Ascending aorta (tissue), 2 donors: ENCODE measurements at regions of chr9 and their contacts with region 1.

Region 1: GRCh38 chr9:14353222-14354056 is 39.5 kb upstream of the NFIB start:
- DNase-seq: peak; percentile 49 to 96
- H3K4me3 ChIP-seq: peak overlapping the region; percentile 18 to 68
- H3K27ac ChIP-seq: peak overlapping the region; percentile 87 to 90
- H3K4me1 ChIP-seq: peaks cover 14 to 35% of the 10 kb centered on the region in 2 donors
- H3K27me3 ChIP-seq: no peaks in the 10 kb centered on the region
- CTCF ChIP-seq: peak; percentile 87 to 96 (median 90)

Region 2: DNA sequence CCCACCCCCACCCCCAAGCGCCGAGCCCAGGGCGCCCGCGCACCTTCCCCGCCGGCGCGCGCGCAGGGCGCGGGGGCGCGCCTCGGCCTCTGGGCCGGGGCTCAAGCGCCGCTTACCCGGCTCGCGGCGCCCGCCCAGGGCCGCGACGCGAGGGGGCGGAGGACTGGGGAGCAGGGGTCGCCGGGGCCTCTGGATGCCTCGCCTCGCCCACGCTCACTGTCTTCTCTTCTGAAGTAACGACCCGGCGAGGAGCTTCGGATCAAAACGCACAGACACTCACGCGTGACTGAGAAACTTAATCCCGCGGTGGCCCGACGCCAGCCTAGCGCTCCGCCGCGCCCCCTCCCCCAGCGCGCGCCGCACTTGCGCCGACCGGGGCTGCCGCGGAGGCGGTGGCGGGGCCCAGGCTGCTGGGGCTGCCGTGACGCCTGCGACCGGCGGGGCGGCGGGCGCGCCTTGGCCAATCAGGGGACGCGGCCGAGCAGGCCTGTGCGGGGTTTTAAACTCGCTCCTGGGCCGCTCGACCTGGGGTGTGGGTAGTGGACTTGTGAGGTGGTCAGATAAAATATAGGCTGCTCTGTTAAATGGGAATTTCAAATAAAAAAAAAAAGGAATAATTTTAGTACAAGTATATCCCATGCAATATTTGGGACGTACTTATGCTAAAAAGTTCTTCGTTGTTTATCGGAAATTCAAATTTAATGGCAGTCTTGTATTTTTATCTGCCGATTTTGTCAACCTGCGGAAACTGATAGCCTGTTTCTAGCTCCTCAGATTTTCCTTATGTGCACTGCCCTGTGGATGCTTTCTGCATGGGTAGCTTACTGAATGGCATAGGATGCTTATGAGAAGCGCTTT is 1073.9 kb before region 1 on chr9 and contains the start of gene MPDZ:
- intact Hi-C with region 1: loop called (anchors 10 kb)
- DNase-seq: peak in 1 of 2 donors; percentile 85
- H3K4me3 ChIP-seq: peak within 1 kb of the TSS; percentile 72 to 86
- H3K27ac ChIP-seq: peak within 1 kb of the TSS; percentile 86 to 93
- H3K4me1 ChIP-seq: peaks cover 5 to 8% of the 10 kb centered on the region in 2 donors
- H3K27me3 ChIP-seq: no peaks in the 10 kb centered on the region
- CTCF ChIP-seq: peak in 1 of 3 experiments; percentile 25
- total RNA-seq, gene MPDZ: 46.2 TPM

Region 3: DNA sequence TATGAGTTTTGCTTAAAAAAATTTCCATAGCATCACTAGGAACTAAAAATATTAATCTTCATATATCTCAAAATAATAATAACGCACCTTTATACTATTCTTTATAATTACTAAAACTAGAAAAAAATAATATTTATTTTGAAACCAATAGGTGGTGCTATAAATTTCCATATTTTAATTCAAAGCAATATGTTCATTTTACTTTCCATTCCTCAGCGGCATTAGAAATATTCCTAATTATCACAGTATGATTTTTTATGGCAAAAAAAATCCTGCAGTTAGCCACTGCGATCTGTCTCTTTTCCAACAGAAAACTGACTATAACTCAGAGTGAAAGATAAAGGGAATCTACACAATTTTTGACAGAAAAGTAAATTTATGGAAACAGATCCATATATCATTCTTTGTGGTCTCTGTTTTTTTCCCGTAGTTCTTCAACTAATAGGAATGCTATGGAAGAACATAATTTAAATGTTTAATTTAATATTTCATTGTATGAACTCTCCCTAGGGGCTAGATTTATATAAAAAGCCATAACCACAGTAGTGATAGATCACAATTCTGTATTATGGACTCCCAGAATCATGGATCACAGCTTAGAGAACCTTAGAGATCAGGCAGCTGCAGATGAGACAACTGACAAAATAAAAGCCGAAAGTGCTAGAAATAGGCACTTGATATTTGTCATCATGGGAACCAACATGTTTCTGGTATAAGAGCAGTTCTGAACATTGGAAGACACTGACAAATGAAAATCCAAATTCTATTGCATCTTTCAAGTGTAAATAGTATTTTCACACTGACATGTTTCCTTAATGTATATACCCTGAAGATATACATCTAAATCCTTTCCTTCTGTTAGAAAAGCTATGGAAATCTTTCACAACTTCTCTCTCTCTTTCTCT is 906.2 kb before region 1 on chr9:
- intact Hi-C with region 1: loop called (anchors 5 kb)
- DNase-seq: no peak
- H3K4me3 ChIP-seq: no peak overlapping the region
- H3K27ac ChIP-seq: no peak overlapping the region
- H3K4me1 ChIP-seq: peaks cover 0 to 8% of the 10 kb centered on the region in 2 donors
- H3K27me3 ChIP-seq: no peaks in the 10 kb centered on the region
- CTCF ChIP-seq: peak in 2 of 3 experiments; percentile 17 to 31

Region 4: DNA sequence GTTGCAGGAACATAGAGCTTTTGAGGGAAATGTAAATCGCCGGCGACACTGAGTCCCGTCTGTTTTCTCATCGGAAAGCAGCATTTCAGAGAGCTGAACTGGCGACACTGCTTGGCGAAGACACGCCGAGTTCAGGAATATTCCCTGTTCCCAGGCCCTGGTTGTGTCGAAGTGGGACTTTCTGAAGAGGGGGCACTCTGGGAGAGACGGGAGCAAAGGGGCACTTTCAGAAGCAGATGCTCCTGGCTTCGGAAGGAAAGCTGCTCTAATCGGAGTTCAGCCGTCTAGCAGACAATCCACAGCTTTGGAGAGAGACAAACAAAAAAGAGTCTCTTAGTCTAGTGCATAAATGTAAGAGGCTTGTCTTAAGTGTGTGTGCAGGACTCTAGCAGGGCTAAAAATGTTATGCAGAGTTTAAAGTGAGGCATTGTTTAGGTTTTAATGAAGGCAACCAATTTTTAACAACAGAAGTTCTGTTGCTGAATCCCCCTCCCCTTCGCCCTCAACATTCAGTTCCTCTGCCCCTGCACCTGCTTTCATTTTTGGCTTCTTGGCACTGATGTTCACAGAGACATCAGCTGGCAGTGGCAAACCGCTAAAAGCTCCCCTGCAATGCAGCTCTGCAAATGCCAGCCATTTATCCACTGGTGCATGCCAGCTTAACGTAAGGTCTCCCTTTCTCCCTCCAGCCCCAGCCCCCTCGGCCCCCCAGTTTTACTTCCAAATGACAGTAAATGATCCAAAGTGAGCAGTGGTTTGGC is 784.4 kb before region 1 on chr9:
- intact Hi-C with region 1: loop called (anchors 5 kb)
- DNase-seq: no peak
- H3K4me3 ChIP-seq: peak overlapping the region; percentile 11 to 56
- H3K27ac ChIP-seq: peak overlapping the region; percentile 91
- H3K4me1 ChIP-seq: peaks cover 11 to 19% of the 10 kb centered on the region in 2 donors
- H3K27me3 ChIP-seq: no peaks in the 10 kb centered on the region
- CTCF ChIP-seq: no peak

Region 5: GRCh38 chr9:14014218-14014617 is 339.2 kb before region 1 on chr9:
- intact Hi-C with region 1: loop called (anchors 5 kb)
- DNase-seq: no peak
- H3K4me3 ChIP-seq: no peak overlapping the region
- H3K27ac ChIP-seq: no peak overlapping the region
- H3K4me1 ChIP-seq: no peaks in the 10 kb centered on the region
- H3K27me3 ChIP-seq: no peaks in the 10 kb centered on the region
- CTCF ChIP-seq: no peak